Head of caudate nucleus (tissue), 42 donors: ENCODE measurements at regions of chr15 and their contacts with region 1.

Region 1: DNA sequence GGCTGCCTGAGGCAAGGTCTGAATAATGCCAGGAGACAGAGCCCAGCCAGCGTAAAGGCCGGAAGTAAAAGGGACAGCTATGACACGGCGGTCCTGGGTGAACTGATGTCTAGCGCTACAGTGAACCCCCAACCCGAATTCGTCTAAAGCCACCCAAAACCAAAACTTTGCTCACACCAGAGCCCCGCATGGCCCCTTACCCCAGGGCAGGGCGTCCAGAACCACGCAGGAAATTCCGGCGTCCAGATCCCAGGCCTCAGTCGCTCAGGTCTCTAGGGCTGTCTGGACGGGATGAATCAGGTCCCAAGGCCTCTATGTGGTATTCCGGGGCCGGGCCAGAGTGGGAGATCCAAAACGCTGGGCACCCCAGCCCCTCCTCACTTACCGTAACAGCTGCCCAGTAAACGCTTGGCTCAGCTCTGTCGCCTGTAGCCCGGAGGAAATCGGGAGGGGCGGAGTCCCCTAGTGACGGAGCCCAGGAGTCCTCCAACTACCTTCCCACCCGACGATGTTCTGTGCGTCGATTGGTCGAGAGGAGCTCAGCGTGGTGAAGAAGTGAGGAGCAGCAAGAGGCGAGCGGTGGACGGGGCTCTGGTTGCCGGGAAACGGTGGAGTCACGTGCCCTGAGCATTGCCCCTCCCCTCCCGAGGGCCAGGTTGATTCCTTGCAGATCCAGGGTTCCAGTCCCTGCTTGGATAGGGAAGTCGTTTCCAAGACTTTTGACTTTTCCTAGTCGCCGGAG is at the start of gene CCDC32:
- DNase-seq: peak; percentile 99 to 100 (median 100)

Region 2: GRCh38 chr15:40754883-40755811 is 190.4 kb after region 1 on chr15 and contains the start of gene RMDN3:
- intact Hi-C with region 1: loop called (anchors 10 kb)
- DNase-seq: peak; percentile 67 to 97 (median 93)

Region 3: DNA sequence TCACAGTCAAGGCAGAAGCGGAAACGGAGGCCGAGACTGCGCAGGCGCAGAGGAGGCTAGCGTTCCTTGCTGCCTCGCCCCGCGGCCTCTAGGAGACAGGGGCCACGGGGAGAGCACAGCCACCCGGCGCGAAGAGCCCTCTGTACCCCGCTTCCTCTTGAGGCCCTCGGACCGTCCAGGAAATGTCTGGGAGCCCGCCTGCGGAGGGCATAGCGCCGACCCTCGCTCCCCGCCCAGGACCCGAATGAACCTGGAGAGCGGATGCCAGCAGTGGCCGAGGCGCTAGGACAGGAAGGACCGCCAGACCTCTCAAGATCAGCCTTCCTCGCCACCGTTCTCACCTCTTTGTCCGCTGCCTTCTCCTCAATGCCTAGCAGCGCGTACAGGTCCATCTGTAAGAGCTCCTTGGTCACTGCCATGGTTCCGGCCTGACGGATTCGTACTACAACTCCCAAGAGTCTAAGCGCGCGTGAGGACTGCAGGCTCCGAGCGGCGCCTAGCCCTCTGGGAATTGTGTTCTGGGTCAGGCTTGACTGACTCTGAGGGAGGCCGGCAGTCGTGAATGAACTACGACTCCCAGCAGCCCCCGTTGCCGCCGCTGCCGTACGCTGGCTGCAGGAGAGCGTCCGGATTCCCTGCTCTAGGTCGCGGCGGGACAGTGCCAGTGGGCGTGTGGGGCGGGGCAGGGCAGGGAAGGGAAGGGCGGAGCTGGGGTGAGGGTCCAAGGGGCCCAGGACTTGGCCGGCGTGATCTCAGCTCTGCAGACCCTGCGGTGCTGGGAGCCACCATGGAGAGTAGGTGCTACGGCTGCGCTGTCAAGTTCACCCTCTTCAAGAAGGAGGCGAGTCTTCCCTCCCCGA is 242.5 kb after region 1 on chr15 and contains the starts of genes DNAJC17 and ZFYVE19:
- intact Hi-C with region 1: loop called (anchors 5 kb)
- DNase-seq: peak; percentile 94 to 100 (median 98)